Posterior vena cava (tissue), 2 donors: ENCODE measurements at regions of chr18 and their contacts with region 1.

Region 1: DNA sequence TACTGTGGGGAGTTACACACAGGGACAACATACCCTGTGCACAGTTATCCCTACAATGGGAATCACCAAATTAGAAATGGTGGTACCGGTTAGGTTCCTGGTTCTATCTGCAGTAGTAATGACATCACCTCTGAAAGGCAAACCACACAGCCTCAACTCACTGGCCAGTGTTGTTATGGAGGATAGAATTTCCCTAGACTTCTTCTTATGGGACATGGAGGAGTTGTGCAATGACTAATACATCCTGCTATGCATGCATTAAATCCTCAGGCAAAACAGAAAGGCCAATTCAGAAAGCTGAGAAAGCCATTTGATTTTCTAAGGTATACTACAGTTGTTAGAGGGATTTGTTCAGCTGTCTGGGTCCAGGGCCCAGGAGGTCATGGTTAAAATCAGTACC is 439.3 kb downstream of the TMX3 start:
- DNase-seq: no peak

Region 2: DNA sequence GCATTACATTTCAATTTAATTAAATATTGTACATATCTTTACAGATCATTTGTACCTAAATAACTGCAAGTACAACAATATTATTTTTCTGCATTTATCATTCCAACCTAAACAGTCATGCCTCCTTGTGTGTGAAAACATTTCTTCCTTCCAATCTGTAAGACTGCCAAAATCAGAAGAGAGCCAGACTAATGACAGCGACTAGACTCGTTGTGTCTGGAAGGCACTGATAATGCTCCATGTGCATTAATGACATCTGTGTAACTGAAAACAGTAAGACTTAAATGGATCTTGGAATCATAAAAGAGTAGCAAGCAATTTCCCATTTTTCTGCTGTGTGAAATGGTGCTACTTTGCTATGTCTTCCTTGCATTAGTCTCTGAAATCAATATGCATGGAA is 481.1 kb before region 1 on chr18:
- intact Hi-C with region 1: loop called in 1 of 2 experiments (anchors 10 kb)
- DNase-seq: no peak